Mammary epithelial cell (primary cell): ENCODE measurements at regions of chr14 and their contacts with region 1.

Region 1: DNA sequence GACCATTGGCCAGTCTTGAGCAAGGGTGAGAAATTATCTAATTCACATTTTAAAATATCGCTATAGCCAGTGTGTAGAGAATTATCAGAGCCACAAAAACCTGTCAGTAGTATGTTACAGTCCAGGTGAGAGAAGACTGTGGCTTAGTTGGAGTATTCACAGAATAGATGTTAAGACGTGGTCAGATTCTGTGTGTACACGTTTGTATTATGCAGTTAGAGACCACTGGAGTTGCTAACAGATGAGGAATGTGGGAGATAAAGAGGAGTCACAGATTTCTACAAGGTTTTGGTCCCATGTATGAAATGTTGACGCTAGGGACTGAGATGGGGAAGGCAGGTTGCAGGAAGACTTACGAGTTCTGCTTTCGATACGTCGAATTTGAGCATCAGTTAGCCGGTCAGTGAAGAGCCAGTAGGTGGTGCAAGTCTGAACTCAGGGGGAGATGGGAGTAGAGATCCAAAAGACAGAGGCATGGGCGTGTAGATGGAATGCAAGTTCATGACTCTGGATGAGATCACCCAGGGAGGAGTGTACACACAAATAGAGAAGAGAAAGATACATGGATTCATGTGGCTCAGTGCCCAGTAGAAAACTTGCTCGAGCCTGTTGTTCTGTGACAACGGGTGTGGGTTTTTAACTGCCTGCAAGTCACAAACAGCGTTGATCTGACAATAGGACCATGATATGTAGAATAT is 114.8 kb upstream of the FLRT2 start:
- DNase-seq: peak; percentile 99
- H3K4me3 ChIP-seq: peak overlapping the region; percentile 25 to 40 (median 37)
- H3K27ac ChIP-seq: peak overlapping the region; percentile 98
- H3K4me1 ChIP-seq: peaks cover 43% of the 10 kb centered on the region
- H3K27me3 ChIP-seq: no peaks in the 10 kb centered on the region
- CTCF ChIP-seq: peak; percentile 67 to 76

Region 2: GRCh38 chr14:84850575-84850974 is 564.6 kb before region 1 on chr14:
- CTCF ChIA-PET with region 1: no interaction called
- dilution Hi-C with region 1: no loop called
- in situ Hi-C with region 1: no loop called
- intact Hi-C with region 1: no loop called
- DNase-seq: no peak
- H3K4me3 ChIP-seq: no peak overlapping the region
- H3K27ac ChIP-seq: no peak overlapping the region
- H3K4me1 ChIP-seq: no peaks in the 10 kb centered on the region
- H3K27me3 ChIP-seq: no peaks in the 10 kb centered on the region
- CTCF ChIP-seq: no peak

Region 3: GRCh38 chr14:85233756-85234155 is 181.4 kb before region 1 on chr14:
- CTCF ChIA-PET with region 1: no interaction called
- dilution Hi-C with region 1: no loop called
- in situ Hi-C with region 1: loop called in 1 of 2 experiments (anchors 25 kb)
- intact Hi-C with region 1: loop called (anchors 1 kb)
- DNase-seq: peak; percentile 86
- H3K4me3 ChIP-seq: no peak overlapping the region
- H3K27ac ChIP-seq: peak overlapping the region; percentile 56
- H3K4me1 ChIP-seq: peaks cover 16% of the 10 kb centered on the region
- H3K27me3 ChIP-seq: no peaks in the 10 kb centered on the region
- CTCF ChIP-seq: no peak

Region 4: DNA sequence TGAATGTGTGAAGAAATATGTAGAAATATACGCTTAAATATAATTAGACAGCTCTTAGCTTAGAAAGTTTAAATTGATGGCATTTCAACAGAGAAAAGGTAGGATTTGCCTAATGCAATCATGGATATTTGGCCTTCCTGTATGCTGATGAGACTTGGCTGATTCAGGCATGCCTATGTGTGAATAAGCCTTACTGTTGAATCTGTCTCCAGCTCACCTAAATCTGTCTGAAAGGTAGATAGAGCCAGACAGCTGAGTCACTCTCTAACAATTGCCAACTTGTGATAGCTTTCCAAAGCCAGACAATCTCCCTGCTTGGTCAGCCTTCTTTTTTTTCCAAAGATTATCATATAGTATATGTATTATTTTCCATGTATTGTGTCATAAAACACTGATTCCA is 22.0 kb after region 1 on chr14:
- CTCF ChIA-PET with region 1: no interaction called
- dilution Hi-C with region 1: no loop called
- in situ Hi-C with region 1: no loop called
- intact Hi-C with region 1: loop called (anchors 1 kb)
- DNase-seq: peak; percentile 96
- H3K4me3 ChIP-seq: no peak overlapping the region
- H3K27ac ChIP-seq: peak overlapping the region; percentile 96
- H3K4me1 ChIP-seq: peaks cover 53% of the 10 kb centered on the region
- H3K27me3 ChIP-seq: no peaks in the 10 kb centered on the region
- CTCF ChIP-seq: no peak

Region 5: GRCh38 chr14:85516239-85517112 is 101.3 kb after region 1 on chr14:
- CTCF ChIA-PET with region 1: no interaction called
- dilution Hi-C with region 1: no loop called
- in situ Hi-C with region 1: no loop called
- intact Hi-C with region 1: loop called (anchors 1 kb)
- DNase-seq: peak; percentile 81
- H3K4me3 ChIP-seq: no peak overlapping the region
- H3K27ac ChIP-seq: peak overlapping the region; percentile 43
- H3K4me1 ChIP-seq: peaks cover 17% of the 10 kb centered on the region
- H3K27me3 ChIP-seq: no peaks in the 10 kb centered on the region
- CTCF ChIP-seq: no peak